ENCODE measurements at regions of chr1 and their contacts with region 1.

Region 1: DNA sequence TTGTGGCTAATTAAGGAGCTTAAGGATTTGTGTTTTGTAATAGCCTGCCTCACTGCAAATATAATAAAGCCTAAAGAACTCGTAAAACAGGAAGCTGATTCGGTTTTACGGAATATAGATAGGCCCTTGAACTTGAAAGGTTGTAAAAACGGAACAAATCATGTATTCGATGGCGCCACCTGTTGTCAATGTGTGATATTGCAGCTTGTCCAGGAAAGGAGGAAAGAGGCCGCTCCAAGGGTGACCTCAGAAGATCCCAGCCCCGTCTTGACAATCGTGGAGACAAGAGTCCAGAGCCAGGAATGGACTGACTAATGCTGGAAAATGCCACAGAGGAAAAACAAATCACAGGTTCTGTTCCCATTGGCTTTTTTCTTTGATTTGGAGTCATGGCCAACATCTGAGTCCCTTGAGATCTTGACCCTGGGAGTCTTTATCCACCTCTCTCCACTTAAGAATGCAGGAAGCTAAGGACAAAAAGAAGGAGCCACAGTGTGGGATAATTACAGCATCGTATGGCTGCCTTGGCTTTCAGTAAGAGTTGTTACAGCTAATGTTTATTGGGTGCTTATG is 7.0 kb upstream of the IGSF21 start:
- DNase-seq: peak in 7 of 10 donors; percentile 64 to 92 (median 74)

Region 2: DNA sequence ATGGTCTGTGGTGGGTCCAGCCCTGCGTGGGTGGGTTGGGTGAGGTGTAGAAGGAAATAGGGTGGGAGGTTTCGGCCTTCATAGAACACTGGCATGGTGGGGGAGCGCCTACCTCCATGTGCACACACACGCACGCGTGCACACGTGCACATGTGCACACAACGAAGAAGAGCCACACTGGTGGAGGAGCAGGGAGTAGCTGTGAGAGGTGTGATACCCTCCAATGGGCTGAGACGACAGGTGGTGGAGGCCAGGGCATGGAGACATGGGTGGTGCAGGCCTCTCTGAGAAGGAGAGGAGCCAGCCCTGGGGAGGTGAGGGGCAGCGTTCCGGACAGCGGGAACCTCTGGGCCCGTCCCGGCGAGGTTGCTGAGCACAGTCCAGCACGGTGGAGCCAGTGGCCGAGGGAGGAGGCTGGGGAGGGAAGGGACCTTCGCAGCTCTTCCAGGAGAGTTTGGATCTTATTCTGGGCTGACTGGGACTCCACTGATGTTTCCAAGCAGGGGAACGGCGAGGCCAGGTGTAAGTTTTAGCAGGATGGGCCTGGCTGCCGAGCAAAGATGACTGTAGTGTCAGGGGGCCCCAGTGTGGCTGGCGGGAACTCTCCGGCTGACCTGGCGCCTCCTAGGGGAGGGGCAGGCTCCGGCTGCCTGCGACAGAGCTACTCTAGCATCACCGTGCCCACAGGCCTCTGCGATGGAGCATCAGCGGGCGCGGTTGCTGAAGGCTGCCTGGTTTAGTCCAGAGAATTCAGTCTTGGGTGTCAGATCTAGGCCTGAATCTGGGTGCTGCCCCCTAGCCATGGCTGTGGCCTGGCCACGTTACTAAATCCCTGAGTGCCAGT is 453.9 kb before region 1 on chr1:
- intact Hi-C with region 1: no loop called
- DNase-seq: peak in 1 of 10 donors; percentile 85

Region 3: GRCh38 chr1:17922833-17923232 is 177.7 kb before region 1 on chr1:
- intact Hi-C with region 1: loop called (anchors 1 kb)
- DNase-seq: peak; percentile 27 to 95 (median 64)

Region 4: GRCh38 chr1:17984583-17984982 is 116.0 kb before region 1 on chr1:
- intact Hi-C with region 1: loop called (anchors 10 kb)
- DNase-seq: peak in 2 of 10 donors; percentile 18 to 36

Region 5: DNA sequence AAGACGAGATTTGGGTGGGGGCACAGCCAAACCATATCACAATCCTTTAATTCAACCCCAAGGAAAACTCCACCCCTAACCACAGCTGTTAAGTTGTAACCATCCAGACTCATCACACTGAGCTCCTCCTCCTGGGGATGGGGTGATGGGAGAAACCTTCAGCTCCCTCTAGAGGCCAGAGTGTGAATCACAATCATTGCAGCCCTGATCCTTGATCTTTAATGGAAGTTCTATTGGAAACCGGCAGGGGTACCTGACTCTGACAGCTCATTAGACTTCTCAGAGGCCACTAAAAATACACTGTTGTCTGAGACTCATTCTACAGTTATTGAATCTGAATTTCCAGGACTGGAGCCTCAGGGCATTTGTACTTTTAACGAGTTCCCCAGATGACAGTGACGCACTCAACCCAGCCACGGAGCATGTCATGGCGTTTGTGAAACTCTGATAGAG is 134.2 kb after region 1 on chr1:
- intact Hi-C with region 1: loop called (anchors 10 kb)
- DNase-seq: peak in 5 of 10 donors; percentile 37 to 85 (median 51)